Activated CD4-positive, alpha-beta T cell treated with anti-CD3 and anti-CD28 coated beads, Interleukin-2, amount 10 ng/mL, durations not matched to agents 24 days and 14 days (primary cell): ENCODE measurements at regions of chr22 and their contacts with region 1.

Region 1: GRCh38 chr22:20116951-20117645 is at the start of gene TRMT2A:
- DNase-seq: peak; percentile 99
- H3K4me3 Mint-ChIP-seq: peak within 1 kb of the TSS; percentile 96
- H3K27ac Mint-ChIP-seq: peak within 1 kb of the TSS; percentile 96
- H3K4me1 Mint-ChIP-seq: peaks cover 33% of the 10 kb centered on the region
- H3K27me3 Mint-ChIP-seq: peaks cover 2% of the 10 kb centered on the region
- total RNA-seq, gene TRMT2A: 125 and 135 TPM in 2 replicates

Region 2: GRCh38 chr22:19143967-19144400 is 973.1 kb before region 1 on chr22:
- intact Hi-C with region 1: loop called (anchors 5 kb)
- DNase-seq: peak; percentile 85
- H3K4me3 Mint-ChIP-seq: peak overlapping the region; percentile 96
- H3K27ac Mint-ChIP-seq: peak overlapping the region; percentile 94
- H3K4me1 Mint-ChIP-seq: peaks cover 13% of the 10 kb centered on the region
- H3K27me3 Mint-ChIP-seq: peaks cover 21% of the 10 kb centered on the region

Region 3: DNA sequence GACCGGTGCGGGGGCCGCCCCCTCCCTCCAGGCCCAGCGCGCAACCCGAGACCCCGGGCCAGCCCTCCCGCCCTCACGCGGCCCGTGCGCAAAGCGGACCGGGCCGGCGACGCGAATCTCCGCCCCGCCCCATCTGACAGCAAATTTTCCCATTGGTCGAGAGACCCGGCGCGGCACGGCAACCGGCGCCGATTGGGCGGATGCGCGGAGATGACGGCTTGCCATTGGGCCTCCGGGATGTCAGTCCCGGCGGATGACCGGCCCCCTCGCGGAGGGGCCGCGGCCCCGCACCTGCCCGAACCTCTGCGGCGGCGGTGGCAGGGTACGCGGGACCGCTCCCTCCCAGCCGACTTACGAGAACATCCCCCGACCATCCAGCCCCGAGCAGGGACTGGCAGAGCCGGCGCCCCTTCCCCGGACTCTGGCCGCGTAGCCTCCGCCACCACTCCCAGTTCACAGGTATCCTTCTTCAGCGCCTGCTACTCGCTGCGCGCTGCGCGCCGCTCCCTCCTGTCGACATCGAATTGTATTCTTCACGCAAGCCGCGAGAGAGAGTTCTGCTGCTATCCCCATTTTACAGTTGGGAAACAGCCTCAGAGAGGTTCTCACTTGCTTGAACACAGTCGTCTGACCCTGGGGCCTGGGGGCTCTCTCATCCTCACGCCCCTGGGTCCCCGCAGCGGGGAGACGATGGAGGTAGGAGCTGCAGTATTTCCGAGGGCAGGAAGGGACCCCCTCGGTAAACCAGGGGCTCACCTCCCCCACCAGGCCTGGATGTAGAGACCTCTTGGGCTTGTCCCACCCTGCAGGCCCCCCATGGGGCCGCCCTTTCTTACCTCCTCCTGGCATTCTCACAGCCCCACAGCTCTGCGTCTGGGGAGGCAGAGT is 100.1 kb before region 1 on chr22 and contains the start of gene ARVCF:
- intact Hi-C with region 1: loop called (anchors 5 kb)
- DNase-seq: peak; percentile 98
- H3K4me3 Mint-ChIP-seq: peak within 1 kb of the TSS; percentile 89
- H3K27ac Mint-ChIP-seq: no peak within 1 kb of the TSS
- H3K4me1 Mint-ChIP-seq: peaks cover 16% of the 10 kb centered on the region
- H3K27me3 Mint-ChIP-seq: peaks cover 25% of the 10 kb centered on the region
- total RNA-seq, gene ARVCF: 2.6 and 4.1 TPM in 2 replicates

Region 4: GRCh38 chr22:20102203-20102780 is 14.8 kb before region 1 on chr22:
- intact Hi-C with region 1: loop called (anchors 1 kb)
- DNase-seq: no peak
- H3K4me3 Mint-ChIP-seq: peak overlapping the region; percentile 24
- H3K27ac Mint-ChIP-seq: peak overlapping the region; percentile 94
- H3K4me1 Mint-ChIP-seq: peaks cover 52% of the 10 kb centered on the region
- H3K27me3 Mint-ChIP-seq: no peaks in the 10 kb centered on the region

Region 5: GRCh38 chr22:20141186-20142077 is 24.3 kb after region 1 on chr22:
- intact Hi-C with region 1: no loop called
- DNase-seq: no peak
- H3K4me3 Mint-ChIP-seq: no peak overlapping the region
- H3K27ac Mint-ChIP-seq: no peak overlapping the region
- H3K4me1 Mint-ChIP-seq: peaks cover 5% of the 10 kb centered on the region
- H3K27me3 Mint-ChIP-seq: no peaks in the 10 kb centered on the region

Region 6: GRCh38 chr22:20507253-20508066 is 390.4 kb after region 1 on chr22 and contains the start of gene MED15:
- intact Hi-C with region 1: loop called (anchors 5 kb)
- DNase-seq: peak; percentile 97
- H3K4me3 Mint-ChIP-seq: peak within 1 kb of the TSS; percentile 96
- H3K27ac Mint-ChIP-seq: peak within 1 kb of the TSS; percentile 95
- H3K4me1 Mint-ChIP-seq: peaks cover 42% of the 10 kb centered on the region
- H3K27me3 Mint-ChIP-seq: no peaks in the 10 kb centered on the region
- total RNA-seq, gene MED15: 113 and 117 TPM in 2 replicates